Left ventricle myocardium inferior (tissue), 1 donor: ENCODE measurements at regions of chr1 and their contacts with region 1.

Region 1: GRCh38 chr1:214337511-214337910 is 56.6 kb downstream of the SMYD2 start:
- DNase-seq: no peak
- H3K4me3 ChIP-seq: no peak overlapping the region
- H3K27ac ChIP-seq: peak overlapping the region; percentile 65
- H3K4me1 ChIP-seq: peaks cover 25% of the 10 kb centered on the region
- H3K27me3 ChIP-seq: no peaks in the 10 kb centered on the region
- CTCF ChIP-seq: no peak

Region 2: GRCh38 chr1:214548988-214549387 is 211.5 kb after region 1 on chr1:
- intact Hi-C with region 1: loop called (anchors 5 kb)
- DNase-seq: peak; percentile 72
- H3K4me3 ChIP-seq: peak overlapping the region; percentile 88
- H3K27ac ChIP-seq: peak overlapping the region; percentile 100
- H3K4me1 ChIP-seq: peaks cover 76% of the 10 kb centered on the region
- H3K27me3 ChIP-seq: no peaks in the 10 kb centered on the region
- CTCF ChIP-seq: no peak